Activated CD4-positive, alpha-beta memory T cell treated with anti-CD3 and anti-CD28 coated beads, Interleukin-2, amount 10 ng/mL, durations not matched to agents 7 days and 5 days (primary cell): ENCODE measurements at regions of chr15 and their contacts with region 1.

Region 1: GRCh38 chr15:43133430-43134156 is at the start of gene TMEM62:
- DNase-seq: peak; percentile 78
- H3K4me3 Mint-ChIP-seq: peak within 1 kb of the TSS; percentile 89
- H3K27ac Mint-ChIP-seq: peak within 1 kb of the TSS; percentile 90
- H3K4me1 Mint-ChIP-seq: peaks cover 33% of the 10 kb centered on the region
- H3K27me3 Mint-ChIP-seq: peaks cover 14% of the 10 kb centered on the region
- total RNA-seq, gene TMEM62: 24.2 to 24.9 TPM

Region 2: DNA sequence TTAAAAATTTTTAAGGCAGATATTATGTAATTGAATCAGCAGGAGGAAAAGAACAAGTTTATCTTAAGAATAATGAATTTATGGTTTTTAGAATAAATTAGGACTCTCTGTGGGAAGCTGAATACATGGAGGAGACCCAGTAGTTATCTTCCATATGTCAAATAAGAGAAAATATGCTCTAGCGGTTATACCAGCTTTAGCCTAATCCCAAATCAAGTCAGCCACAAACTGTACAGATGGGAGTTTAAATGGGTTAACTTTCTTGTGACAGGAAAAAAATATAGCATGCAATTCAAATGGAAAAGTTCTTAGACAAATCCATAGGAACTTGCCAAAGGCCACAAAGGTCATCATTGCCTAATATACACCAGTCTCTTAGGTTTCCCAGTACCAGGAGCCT is 297.3 kb before region 1 on chr15:
- CTCF ChIA-PET with region 1: no interaction called
- POLR2A ChIA-PET with region 1: no interaction called
- DNase-seq: no peak
- H3K4me3 Mint-ChIP-seq: no peak overlapping the region
- H3K27ac Mint-ChIP-seq: no peak overlapping the region
- H3K4me1 Mint-ChIP-seq: no peaks in the 10 kb centered on the region
- H3K27me3 Mint-ChIP-seq: no peaks in the 10 kb centered on the region

Region 3: DNA sequence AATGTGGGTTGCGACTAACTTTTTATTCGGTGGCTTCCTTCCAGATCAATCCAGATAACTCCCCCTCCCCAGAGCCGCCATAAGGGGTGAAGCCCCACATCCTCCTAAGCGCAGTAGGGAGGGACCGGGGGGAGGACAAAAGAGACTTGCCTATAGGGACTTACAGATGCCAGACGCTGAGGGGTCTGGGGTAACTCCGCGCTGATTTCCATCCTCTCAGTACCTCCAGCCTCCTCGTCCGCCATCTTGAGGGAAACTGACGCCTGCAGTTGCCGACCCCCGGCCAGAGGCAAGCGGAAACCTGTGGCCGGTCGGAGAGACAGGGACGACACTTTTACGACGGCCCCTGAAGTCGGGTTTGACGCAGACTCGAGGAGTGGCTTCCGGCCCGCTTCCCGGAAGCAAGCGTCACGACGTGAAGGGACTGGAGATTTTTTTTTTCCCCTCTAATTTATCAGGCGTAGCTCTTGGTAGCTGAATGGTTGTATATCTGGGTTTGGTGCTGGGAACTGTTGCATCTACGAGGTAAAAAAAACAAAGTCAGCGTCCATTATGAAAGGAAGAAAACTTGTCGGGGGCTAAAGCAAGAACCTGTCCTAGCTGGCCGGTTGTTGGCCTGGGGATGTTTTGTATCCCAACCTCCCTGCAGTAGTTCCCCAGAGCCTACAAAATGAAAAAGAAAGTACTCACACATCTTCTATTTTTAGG is 27.7 kb before region 1 on chr15 and contains the start of gene UBR1:
- CTCF ChIA-PET with region 1: interaction called, 4 read pairs
- POLR2A ChIA-PET with region 1: interaction called, 14 read pairs
- DNase-seq: peak; percentile 93
- H3K4me3 Mint-ChIP-seq: peak within 1 kb of the TSS; percentile 96
- H3K27ac Mint-ChIP-seq: peak within 1 kb of the TSS; percentile 89
- H3K4me1 Mint-ChIP-seq: peaks cover 43% of the 10 kb centered on the region
- H3K27me3 Mint-ChIP-seq: no peaks in the 10 kb centered on the region
- total RNA-seq, gene UBR1: 41.8 to 42.4 TPM

Region 4: DNA sequence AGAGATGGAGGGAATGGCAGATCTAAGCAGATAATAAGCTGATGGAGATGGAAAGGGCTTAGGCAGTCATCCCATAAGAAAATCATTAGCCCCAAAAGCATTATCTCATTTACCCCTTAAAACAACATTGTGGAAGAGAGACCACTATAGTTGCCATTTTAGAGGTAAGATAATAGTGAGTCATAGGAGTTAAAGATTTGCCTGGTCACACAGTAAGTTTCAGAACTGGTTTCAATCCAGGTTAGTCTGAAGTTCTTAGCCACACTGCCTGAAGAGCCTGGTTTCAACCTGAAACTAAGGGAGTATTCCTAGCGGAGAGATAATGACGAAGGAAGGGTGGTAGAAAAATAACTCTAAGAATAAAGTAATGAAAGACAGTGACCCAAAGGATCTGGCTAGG is 14.8 kb before region 1 on chr15:
- CTCF ChIA-PET with region 1: interaction called, 4 read pairs
- POLR2A ChIA-PET with region 1: interaction called, 16 read pairs
- DNase-seq: no peak
- H3K4me3 Mint-ChIP-seq: no peak overlapping the region
- H3K27ac Mint-ChIP-seq: no peak overlapping the region
- H3K4me1 Mint-ChIP-seq: peaks cover 22% of the 10 kb centered on the region
- H3K27me3 Mint-ChIP-seq: peaks cover 25% of the 10 kb centered on the region

Region 5: DNA sequence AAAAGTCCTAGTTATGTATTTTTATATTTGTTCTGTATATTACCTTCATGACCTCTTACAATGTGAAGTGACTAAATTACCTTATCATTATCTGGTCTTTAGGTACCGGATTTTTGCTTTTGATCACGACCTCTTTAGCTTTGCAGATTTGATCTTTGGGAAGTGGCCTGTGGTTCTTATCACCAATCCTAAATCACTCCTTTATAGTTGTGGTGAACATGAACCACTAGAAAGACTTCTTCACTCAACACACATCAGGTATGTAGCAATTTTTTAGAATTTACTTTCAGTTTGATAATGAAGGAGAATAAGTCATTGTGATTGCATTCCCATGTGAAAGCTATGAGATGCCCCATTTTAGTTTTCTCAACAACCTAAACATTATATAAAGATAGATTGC is 18.1 kb after region 1 on chr15:
- CTCF ChIA-PET with region 1: no interaction called
- POLR2A ChIA-PET with region 1: interaction called, 11 read pairs
- DNase-seq: no peak
- H3K4me3 Mint-ChIP-seq: no peak overlapping the region
- H3K27ac Mint-ChIP-seq: peak overlapping the region; percentile 38
- H3K4me1 Mint-ChIP-seq: peaks cover 24% of the 10 kb centered on the region
- H3K27me3 Mint-ChIP-seq: no peaks in the 10 kb centered on the region